ENCODE measurements at regions of chr17 and their contacts with region 1.

Region 1: GRCh38 chr17:49952209-49952911 is 16.6 kb upstream of the DLX4 start:
- DNase-seq: peak; percentile 93
- H3K4me3 Mint-ChIP-seq: no peak overlapping the region
- H3K27ac Mint-ChIP-seq: no peak overlapping the region
- H3K4me1 Mint-ChIP-seq: no peaks in the 10 kb centered on the region
- H3K27me3 Mint-ChIP-seq: peaks cover 24% of the 10 kb centered on the region

Region 2: DNA sequence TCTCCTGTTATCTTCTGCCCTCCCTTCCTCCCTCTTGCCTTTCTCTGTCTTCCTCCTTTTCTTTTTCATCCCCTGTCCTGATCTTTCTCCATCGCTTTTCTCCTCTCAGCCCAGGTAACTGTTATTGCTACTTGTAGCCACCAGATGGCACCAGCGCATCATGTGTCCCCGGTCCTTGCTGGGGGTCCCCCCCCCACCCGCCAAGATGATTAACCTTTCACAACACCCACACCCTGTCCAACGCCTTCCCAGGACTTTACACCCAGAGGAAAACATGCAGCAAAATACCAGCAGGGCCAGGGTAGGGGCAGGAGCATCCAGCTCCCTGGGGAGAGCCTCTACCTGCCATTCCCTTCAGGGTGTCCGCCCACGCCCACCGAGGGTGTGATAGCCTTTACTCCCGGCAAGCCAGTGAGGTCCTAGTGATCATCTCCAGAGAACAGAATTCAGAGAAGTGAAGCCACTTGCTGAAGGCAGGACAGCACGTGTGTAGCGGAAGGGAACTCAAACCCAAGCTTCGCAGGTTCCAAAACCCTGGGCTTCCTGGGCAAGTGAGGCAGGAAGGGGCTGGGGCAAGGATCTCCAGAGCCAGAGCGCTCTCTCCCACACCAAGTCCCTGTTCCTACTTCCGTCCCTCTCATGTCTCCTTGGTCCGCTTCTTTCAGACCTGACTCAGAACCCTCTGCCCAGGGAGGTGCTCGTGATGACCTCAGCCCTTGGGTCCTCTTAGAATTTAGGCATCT is 91.0 kb before region 1 on chr17:
- CTCF ChIA-PET with region 1: interaction called, 8 read pairs
- intact Hi-C with region 1: loop called (anchors 2 kb)
- DNase-seq: peak; percentile 58
- H3K4me3 Mint-ChIP-seq: no peak overlapping the region
- H3K27ac Mint-ChIP-seq: no peak overlapping the region
- H3K4me1 Mint-ChIP-seq: peaks cover 3% of the 10 kb centered on the region
- H3K27me3 Mint-ChIP-seq: peaks cover 3% of the 10 kb centered on the region

Region 3: GRCh38 chr17:49873466-49873865 is 78.9 kb before region 1 on chr17:
- CTCF ChIA-PET with region 1: interaction called, 25 read pairs
- intact Hi-C with region 1: no loop called
- DNase-seq: no peak
- H3K4me3 Mint-ChIP-seq: no peak overlapping the region
- H3K27ac Mint-ChIP-seq: no peak overlapping the region
- H3K4me1 Mint-ChIP-seq: peaks cover 19% of the 10 kb centered on the region
- H3K27me3 Mint-ChIP-seq: peaks cover 2% of the 10 kb centered on the region

Region 4: GRCh38 chr17:49880291-49881053 is 71.9 kb before region 1 on chr17:
- CTCF ChIA-PET with region 1: interaction called, 25 read pairs
- intact Hi-C with region 1: loop called (anchors 2 kb)
- DNase-seq: peak; percentile 81
- H3K4me3 Mint-ChIP-seq: no peak overlapping the region
- H3K27ac Mint-ChIP-seq: no peak overlapping the region
- H3K4me1 Mint-ChIP-seq: peaks cover 7% of the 10 kb centered on the region
- H3K27me3 Mint-ChIP-seq: peaks cover 32% of the 10 kb centered on the region

Region 5: GRCh38 chr17:49910094-49910857 is 42.1 kb before region 1 on chr17:
- CTCF ChIA-PET with region 1: no interaction called
- intact Hi-C with region 1: no loop called
- DNase-seq: peak; percentile 55
- H3K4me3 Mint-ChIP-seq: peak overlapping the region; percentile 53
- H3K27ac Mint-ChIP-seq: no peak overlapping the region
- H3K4me1 Mint-ChIP-seq: peaks cover 10% of the 10 kb centered on the region
- H3K27me3 Mint-ChIP-seq: peaks cover 68% of the 10 kb centered on the region

Measured in activated naive CD4-positive, alpha-beta T cell treated with anti-CD3 and anti-CD28 coated beads for 36 hours (primary cell).